ENCODE measurements at regions of chr16 and their contacts with region 1.

Region 1: GRCh38 chr16:85554112-85554813 is 58.9 kb upstream of the GSE1 start:
- DNase-seq: peak; percentile 63 to 76
- H3K4me3 ChIP-seq: peak overlapping the region; percentile 72
- H3K27ac ChIP-seq: peak overlapping the region; percentile 62
- H3K4me1 ChIP-seq: peaks cover 22% of the 10 kb centered on the region
- H3K27me3 ChIP-seq: no peaks in the 10 kb centered on the region
- CTCF ChIP-seq: no peak

Region 2: DNA sequence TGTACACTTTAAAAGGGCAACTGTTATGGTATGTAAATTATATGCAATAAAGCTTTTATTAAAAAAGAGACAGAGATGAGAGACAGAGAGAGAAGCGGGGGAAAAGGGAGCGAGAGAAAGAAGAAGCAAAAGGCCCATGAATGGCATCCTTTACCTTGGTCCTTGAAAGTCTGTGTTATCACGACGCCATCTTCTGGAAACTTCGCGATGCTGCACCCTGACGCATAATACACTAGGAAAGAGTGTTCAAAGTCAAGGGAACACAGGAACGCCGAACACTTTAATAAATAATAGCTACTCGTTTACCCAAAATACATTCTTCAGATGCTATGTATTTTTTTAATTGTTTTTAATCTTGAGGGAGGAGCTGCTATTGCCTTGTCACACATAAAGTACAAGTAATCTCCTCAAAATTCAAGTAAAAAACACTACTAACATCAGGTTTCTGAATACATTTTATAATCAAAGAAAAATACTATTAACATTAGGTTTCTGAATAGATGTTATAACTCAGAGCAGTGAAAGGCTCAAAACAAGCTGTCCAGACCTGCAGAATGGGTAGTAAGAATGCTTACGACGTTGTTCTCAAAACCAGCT is 1488.6 kb before region 1 on chr16:
- CTCF ChIA-PET with region 1: no interaction called
- POLR2A ChIA-PET with region 1: no interaction called
- intact Hi-C with region 1: no loop called
- DNase-seq: peak in 1 of 2 experiments; percentile 42
- H3K4me3 ChIP-seq: no peak overlapping the region
- H3K27ac ChIP-seq: no peak overlapping the region
- H3K4me1 ChIP-seq: no peaks in the 10 kb centered on the region
- H3K27me3 ChIP-seq: no peaks in the 10 kb centered on the region
- CTCF ChIP-seq: peak; percentile 66

Region 3: DNA sequence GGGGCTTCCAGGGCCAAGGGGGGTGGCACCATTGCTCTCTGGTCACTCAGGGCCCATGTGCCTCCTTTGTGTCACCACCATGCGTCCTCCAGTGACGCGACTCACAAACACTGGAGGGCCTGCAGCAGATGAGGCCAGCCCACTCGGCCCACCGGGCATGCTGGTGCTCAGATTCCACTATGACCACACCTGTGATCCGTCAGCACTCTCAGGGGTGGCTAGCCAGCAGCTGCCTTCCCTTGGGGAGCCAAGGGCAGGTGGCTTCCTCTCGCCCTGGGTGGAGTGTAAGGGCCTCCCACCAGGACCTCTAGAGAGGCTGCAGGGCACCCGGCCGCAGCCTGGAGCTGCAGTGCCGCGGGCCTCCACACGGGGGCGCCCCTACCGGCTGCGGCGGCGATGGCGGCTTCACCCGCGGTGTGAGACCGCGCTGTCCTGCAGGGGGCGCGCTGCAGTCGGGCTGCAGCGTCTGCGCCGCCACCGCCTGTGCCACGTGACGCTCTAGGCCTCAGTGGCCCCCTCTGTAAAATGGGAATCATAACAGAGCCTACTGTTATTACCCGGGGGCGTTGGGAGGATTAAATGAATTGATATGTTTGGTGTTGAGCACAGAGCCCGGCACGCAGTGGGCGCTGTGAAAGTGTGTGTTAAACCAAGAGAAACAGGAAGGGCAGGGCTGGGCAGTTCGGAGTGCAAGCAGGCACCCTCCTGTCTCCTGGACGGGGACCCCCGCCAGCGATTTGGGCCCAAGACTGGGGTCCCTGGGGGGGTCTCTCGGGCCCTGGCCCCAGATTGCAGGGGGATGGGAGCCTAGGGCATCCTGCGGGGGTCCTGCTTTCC is 133.5 kb before region 1 on chr16:
- CTCF ChIA-PET with region 1: interaction called, 3 read pairs
- POLR2A ChIA-PET with region 1: no interaction called
- intact Hi-C with region 1: loop called (anchors 5 kb)
- DNase-seq: peak in 1 of 2 experiments; percentile 75
- H3K4me3 ChIP-seq: no peak overlapping the region
- H3K27ac ChIP-seq: no peak overlapping the region
- H3K4me1 ChIP-seq: peaks cover 20% of the 10 kb centered on the region
- H3K27me3 ChIP-seq: no peaks in the 10 kb centered on the region
- CTCF ChIP-seq: peak; percentile 99

Region 4: DNA sequence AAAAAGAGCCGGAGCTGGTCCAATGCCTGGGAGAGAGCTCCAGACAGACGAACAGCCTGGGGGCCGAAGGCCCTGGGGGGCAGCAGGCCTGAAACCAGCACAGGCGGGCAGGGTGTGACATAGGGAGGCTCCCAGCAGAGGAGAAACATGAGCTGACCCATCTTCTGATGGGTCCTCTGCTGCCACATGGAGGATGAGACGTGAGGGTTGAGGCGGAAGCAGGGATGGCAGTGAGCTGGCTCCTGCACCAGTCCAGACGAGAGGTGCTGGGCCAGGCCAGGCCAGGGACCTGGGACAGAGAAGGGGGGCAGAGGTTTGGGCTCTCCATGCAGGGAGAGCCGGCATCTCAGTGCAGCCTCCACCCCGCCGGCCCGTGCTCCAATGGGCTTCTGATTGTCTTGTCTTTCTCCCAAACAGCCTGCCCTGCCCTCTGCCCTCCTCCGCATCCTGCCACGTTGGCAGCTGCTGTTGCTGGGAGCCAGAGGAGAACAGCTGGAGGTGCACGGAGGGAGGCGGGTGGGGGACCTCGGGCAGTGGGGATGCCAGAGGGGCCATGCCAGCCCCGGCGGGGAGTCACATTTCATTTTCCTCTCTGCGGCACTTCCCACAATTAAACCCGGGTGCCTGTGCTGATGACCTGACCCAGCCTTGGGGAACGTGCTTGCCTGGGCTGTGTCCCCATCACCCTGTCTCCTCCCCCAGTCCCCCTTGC is 80.2 kb before region 1 on chr16:
- CTCF ChIA-PET with region 1: interaction called, 6 read pairs
- POLR2A ChIA-PET with region 1: interaction called, 6 read pairs
- intact Hi-C with region 1: loop called (anchors 5 kb)
- DNase-seq: no peak
- H3K4me3 ChIP-seq: no peak overlapping the region
- H3K27ac ChIP-seq: no peak overlapping the region
- H3K4me1 ChIP-seq: peaks cover 39% of the 10 kb centered on the region
- H3K27me3 ChIP-seq: no peaks in the 10 kb centered on the region
- CTCF ChIP-seq: no peak

Region 5: GRCh38 chr16:85484347-85485300 is 69.6 kb before region 1 on chr16:
- CTCF ChIA-PET with region 1: no interaction called
- POLR2A ChIA-PET with region 1: no interaction called
- intact Hi-C with region 1: no loop called
- DNase-seq: no peak
- H3K4me3 ChIP-seq: no peak overlapping the region
- H3K27ac ChIP-seq: no peak overlapping the region
- H3K4me1 ChIP-seq: peaks cover 22% of the 10 kb centered on the region
- H3K27me3 ChIP-seq: no peaks in the 10 kb centered on the region
- CTCF ChIP-seq: no peak

Region 6: DNA sequence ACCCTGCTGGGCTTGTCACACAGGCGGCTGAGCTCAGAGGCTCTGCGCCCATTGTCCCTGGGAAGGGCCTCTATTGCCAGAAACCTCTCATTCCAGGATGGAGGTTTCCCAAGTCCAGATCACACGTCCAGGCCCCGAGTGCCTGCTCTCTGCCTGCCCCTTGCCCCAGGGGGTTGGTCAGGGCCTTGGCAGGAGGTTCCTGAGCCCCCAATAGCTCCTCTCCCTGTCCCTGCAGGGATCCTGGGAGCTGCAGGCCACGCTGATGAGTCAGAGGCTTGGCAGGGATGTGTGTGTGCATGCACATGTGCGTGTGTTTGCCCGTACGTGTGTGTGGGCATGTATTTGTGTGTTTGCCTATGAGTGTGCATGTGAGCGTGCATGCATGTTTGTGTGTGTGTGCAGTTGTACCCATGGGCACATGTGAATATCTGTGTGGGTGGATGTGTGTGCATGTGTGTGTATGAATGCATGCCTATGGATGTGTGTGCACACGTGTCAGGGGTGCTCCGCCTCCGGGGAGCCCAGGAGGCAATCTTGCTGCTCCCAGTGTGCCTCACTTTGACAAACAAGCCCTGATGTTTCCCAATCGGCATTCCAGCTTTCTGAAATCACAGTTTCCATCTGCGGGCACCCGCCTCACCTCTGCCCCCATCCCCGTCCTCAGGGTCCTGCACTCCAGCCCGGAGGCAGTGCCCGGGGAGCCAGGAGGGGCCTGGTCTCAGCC is 39.5 kb before region 1 on chr16:
- CTCF ChIA-PET with region 1: interaction called, 3 read pairs
- POLR2A ChIA-PET with region 1: interaction called, 15 read pairs
- intact Hi-C with region 1: loop called (anchors 2 kb)
- DNase-seq: peak; percentile 87 to 95
- H3K4me3 ChIP-seq: peak overlapping the region; percentile 46; the same call in 1 of the 2 replicates
- H3K27ac ChIP-seq: peak overlapping the region; percentile 93
- H3K4me1 ChIP-seq: peaks cover 44% of the 10 kb centered on the region
- H3K27me3 ChIP-seq: no peaks in the 10 kb centered on the region
- CTCF ChIP-seq: no peak; the same call in 1 of the 2 replicates

Region 7: GRCh38 chr16:85615852-85616606 is 61.8 kb after region 1 on chr16:
- CTCF ChIA-PET with region 1: interaction called, 8 read pairs
- POLR2A ChIA-PET with region 1: interaction called, 19 read pairs
- intact Hi-C with region 1: no loop called
- DNase-seq: peak; percentile 46 to 59
- H3K4me3 ChIP-seq: peak overlapping the region; percentile 88; the same call in 1 of the 2 replicates
- H3K27ac ChIP-seq: no peak overlapping the region
- H3K4me1 ChIP-seq: peaks cover 27% of the 10 kb centered on the region
- H3K27me3 ChIP-seq: no peaks in the 10 kb centered on the region
- CTCF ChIP-seq: peak; percentile 91